Activated B cell treated with CpG ODN at 0.5 μM for 24 hours (primary cell): ENCODE measurements at regions of chr20 and their contacts with region 1.

Region 1: GRCh38 chr20:33992923-33993575 is 662 bp upstream of the RALY start:
- DNase-seq: peak; percentile 98
- ATAC-seq: peak; percentile 84
- H3K4me3 Mint-ChIP-seq: peak overlapping the region; percentile 95
- H3K27ac Mint-ChIP-seq: peak overlapping the region; percentile 98
- H3K4me1 Mint-ChIP-seq: peaks cover 60% of the 10 kb centered on the region
- H3K27me3 Mint-ChIP-seq: no peaks in the 10 kb centered on the region
- CTCF ChIP-seq: no peak

Region 2: GRCh38 chr20:33401184-33401920 is 591.7 kb before region 1 on chr20 and contains the start of gene CDK5RAP1:
- CTCF ChIA-PET with region 1: no interaction called
- POLR2A ChIA-PET with region 1: no interaction called
- intact Hi-C with region 1: loop called (anchors 10 kb)
- DNase-seq: peak; percentile 76
- ATAC-seq: peak; percentile 99
- H3K4me3 Mint-ChIP-seq: peak within 1 kb of the TSS; percentile 94
- H3K27ac Mint-ChIP-seq: peak within 1 kb of the TSS; percentile 90
- H3K4me1 Mint-ChIP-seq: peaks cover 41% of the 10 kb centered on the region
- H3K27me3 Mint-ChIP-seq: no peaks in the 10 kb centered on the region
- CTCF ChIP-seq: no peak
- total RNA-seq, gene CDK5RAP1: 44.2 and 50.5 TPM in 2 replicates

Region 3: DNA sequence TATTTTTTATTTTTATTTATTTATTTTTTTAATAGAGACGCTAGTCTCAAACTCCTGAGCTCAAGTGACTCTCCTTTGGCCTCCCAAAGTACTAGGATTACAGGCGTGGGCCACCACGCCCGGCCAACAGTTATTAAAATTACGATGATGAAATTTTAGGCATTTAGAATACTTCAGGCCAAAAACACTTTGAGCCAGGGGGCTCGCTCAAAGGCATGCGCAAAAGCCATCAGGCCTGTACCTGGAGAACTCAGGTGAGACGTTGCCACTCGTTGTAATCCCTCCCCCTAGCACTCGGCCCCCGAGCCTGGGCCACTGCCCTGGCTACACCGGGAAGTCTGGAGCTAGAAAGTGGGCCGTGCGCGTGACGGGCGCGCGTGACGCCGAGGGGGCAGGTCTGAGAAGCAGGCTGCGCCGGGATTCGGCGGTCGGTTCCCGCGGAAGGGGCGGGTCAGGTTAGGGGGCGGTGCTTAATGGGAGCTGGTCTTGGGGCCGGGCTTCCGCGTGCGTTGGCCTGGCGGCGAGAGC is 503.5 kb before region 1 on chr20:
- CTCF ChIA-PET with region 1: no interaction called
- POLR2A ChIA-PET with region 1: interaction called, 15 read pairs
- intact Hi-C with region 1: loop called (anchors 2 kb)
- DNase-seq: peak; percentile 99
- ATAC-seq: peak; percentile 96
- H3K4me3 Mint-ChIP-seq: peak overlapping the region; percentile 84
- H3K27ac Mint-ChIP-seq: peak overlapping the region; percentile 88
- H3K4me1 Mint-ChIP-seq: peaks cover 15% of the 10 kb centered on the region
- H3K27me3 Mint-ChIP-seq: no peaks in the 10 kb centered on the region
- CTCF ChIP-seq: no peak

Region 4: DNA sequence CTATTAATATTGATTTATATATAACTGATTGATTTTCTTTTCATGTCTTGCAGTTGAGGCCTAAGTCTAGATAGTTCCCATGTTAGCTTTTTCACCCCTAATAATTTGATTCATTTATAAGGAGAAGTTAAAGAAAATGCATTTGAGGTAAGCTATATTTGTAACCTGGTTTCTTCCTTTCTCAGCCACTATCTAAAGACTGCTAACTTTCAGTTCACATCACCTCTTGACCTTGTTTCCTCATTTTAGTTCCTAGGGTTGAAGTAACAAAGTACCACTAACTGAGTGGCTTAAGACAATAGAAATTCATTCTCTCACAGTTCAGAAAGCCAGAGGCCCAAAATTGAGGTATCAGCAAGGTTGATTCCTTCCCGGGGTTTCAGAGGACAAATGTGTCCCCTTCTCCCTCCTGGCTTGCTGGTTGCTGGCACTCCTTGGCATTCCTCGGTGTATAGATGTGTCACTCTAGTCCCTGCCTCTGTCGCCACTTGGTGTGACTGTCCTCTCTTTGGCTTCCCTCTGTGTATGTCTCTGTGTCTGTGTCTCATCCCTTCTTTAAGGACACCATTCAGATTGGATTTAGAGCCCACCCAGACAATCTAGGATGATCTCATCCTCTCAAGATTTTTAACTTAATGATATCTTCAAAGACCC is 386.8 kb before region 1 on chr20:
- CTCF ChIA-PET with region 1: no interaction called
- POLR2A ChIA-PET with region 1: no interaction called
- intact Hi-C with region 1: no loop called
- DNase-seq: peak; percentile 16
- ATAC-seq: peak; percentile 69
- H3K4me3 Mint-ChIP-seq: peak overlapping the region; percentile 52
- H3K27ac Mint-ChIP-seq: peak overlapping the region; percentile 87
- H3K4me1 Mint-ChIP-seq: peaks cover 86% of the 10 kb centered on the region
- H3K27me3 Mint-ChIP-seq: no peaks in the 10 kb centered on the region
- CTCF ChIP-seq: no peak

Region 5: DNA sequence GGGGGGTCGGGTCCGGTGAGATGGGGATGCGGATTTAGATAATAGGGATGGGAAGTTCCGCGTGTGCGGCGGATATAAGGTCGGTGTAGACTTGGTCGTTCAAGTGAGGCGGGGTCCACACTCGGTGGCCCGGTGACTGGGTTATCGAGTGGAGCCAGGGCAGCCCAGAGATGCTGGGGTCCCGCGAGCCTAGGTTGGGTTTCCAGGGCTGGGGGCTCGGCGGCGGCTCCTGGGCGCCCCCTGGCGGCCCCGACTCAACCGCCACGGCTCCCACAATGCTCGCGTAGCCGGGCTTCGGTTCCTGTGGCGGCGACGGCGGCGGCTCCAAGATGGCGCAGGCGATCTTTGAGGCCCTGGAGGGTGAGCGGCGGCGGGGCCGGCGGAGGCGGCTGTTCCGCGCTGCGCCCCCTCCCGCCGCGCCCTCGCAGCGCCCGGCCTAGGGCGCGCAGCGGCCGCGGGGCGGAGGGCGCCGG is 261.3 kb before region 1 on chr20 and contains the start of gene ZNF341:
- CTCF ChIA-PET with region 1: no interaction called
- POLR2A ChIA-PET with region 1: interaction called, 22 read pairs
- intact Hi-C with region 1: loop called (anchors 1 kb)
- DNase-seq: no peak
- ATAC-seq: peak; percentile 79
- H3K4me3 Mint-ChIP-seq: peak within 1 kb of the TSS; percentile 90
- H3K27ac Mint-ChIP-seq: peak within 1 kb of the TSS; percentile 93
- H3K4me1 Mint-ChIP-seq: peaks cover 26% of the 10 kb centered on the region
- H3K27me3 Mint-ChIP-seq: no peaks in the 10 kb centered on the region
- CTCF ChIP-seq: no peak
- total RNA-seq, gene ZNF341: 9.2 and 10.1 TPM in 2 replicates

Region 6: DNA sequence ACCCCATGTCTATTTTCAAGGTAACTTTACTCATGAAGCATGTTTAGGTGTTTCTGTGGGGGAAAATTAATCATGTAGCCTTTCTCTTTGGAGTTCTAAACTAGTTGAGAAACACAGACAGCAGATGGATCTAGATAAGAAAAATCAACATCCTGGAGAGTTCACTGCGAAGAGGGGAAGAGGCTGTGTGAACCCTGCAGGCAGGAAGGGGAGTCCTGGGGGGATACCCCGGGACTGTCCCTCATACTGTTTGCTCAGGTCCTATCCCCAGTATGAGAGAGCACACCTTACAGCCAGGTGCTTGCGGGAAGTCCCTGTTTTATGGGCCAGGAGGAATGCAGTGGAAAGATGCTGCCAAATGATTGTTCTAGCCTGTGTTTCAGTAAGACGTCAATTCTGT is 149.2 kb before region 1 on chr20:
- CTCF ChIA-PET with region 1: no interaction called
- POLR2A ChIA-PET with region 1: no interaction called
- intact Hi-C with region 1: loop called (anchors 1 kb)
- DNase-seq: peak; percentile 22
- ATAC-seq: peak; percentile 97
- H3K4me3 Mint-ChIP-seq: peak overlapping the region; percentile 53
- H3K27ac Mint-ChIP-seq: peak overlapping the region; percentile 74
- H3K4me1 Mint-ChIP-seq: peaks cover 87% of the 10 kb centered on the region
- H3K27me3 Mint-ChIP-seq: no peaks in the 10 kb centered on the region
- CTCF ChIP-seq: no peak

Region 7: DNA sequence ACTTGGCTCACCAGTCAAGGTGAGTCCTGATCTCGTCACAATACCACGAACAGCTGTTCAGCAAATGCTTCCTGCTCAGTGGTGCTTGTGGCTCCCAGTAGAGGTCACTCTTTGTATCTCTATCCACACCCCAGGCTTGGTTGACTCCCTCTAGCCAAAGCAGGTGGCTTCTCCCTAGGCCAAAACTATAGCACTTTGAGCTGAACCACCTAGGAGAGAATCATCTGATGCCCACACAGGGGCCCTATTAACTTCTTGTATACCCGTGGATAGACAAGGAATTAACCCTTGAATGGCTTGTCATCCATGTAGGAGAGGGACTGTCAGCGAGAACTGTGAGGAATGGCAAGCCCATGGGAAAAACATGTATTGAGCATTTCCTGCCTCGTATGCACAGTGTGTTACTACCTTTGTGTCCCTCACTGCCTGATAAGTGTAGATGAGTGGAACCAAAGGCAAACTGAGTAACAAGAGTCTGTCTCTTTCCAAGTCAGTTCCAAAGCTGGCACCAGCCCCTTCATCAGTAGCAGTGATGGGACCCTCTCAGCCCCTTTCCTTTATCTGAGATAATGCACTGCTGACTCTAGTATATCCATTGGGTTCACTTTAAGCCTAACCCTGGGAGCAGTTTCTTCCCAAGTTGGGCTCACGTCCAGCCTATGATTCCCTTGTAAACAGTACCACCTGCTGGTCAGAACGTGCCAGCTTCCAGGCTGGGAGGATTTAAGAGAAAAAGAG is 76.5 kb after region 1 on chr20:
- CTCF ChIA-PET with region 1: no interaction called
- POLR2A ChIA-PET with region 1: no interaction called
- intact Hi-C with region 1: no loop called
- DNase-seq: no peak
- ATAC-seq: peak; percentile 89
- H3K4me3 Mint-ChIP-seq: no peak overlapping the region
- H3K27ac Mint-ChIP-seq: peak overlapping the region; percentile 61
- H3K4me1 Mint-ChIP-seq: peaks cover 24% of the 10 kb centered on the region
- H3K27me3 Mint-ChIP-seq: no peaks in the 10 kb centered on the region
- CTCF ChIP-seq: peak; percentile 36

Region 8: DNA sequence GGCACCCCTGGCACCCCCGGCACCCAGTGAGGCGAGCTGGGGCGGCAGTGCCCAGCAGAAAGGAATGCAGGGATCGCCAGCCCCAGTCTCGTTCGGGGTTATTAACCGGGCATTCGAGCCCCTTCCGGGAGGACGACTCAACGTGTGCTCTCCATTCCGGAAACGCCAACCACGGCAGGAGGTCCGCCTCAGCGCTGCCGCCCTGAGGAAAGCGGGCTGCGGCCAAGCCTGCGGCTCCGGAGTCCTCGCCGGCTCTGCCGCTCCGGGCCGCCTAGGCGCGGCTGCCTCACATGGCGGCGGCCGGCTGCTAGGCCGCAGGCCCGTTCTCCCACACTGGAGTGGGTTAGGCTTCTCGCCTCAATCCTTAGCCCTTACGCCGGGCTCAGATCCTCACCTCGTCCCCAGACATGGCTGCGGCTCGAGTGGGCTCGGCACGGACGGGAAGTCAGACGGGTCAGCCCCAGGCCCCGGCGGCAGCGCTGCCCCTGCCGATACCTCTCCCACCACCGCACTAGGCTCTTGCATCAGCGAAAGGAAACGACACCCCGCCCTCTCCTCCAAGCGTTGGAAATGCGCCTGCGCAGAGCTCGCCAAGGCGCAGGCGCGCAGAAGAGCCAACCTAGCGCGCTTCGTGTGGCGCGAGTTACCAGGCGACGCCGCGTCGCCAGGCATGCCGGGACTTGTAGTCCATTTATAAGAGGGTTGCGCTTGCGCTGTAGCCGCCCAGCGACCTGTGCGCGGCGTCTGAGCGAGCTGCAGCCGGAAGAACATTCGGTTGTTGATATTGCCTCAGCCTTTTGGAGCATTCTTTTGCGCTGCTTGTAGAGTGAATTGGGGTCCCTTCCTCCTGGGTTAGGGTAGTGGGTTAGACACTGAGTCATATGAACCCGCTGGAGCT is 118.9 kb after region 1 on chr20 and contains the start of gene EIF2S2:
- CTCF ChIA-PET with region 1: no interaction called
- POLR2A ChIA-PET with region 1: interaction called, 33 read pairs
- intact Hi-C with region 1: loop called (anchors 1 kb)
- DNase-seq: peak; percentile 87
- ATAC-seq: peak; percentile 84
- H3K4me3 Mint-ChIP-seq: peak within 1 kb of the TSS; percentile 96
- H3K27ac Mint-ChIP-seq: peak within 1 kb of the TSS; percentile 98
- H3K4me1 Mint-ChIP-seq: peaks cover 49% of the 10 kb centered on the region
- H3K27me3 Mint-ChIP-seq: no peaks in the 10 kb centered on the region
- CTCF ChIP-seq: no peak
- total RNA-seq, gene EIF2S2: 58.3 and 62.2 TPM in 2 replicates

Region 9: GRCh38 chr20:34579191-34579978 is 586.3 kb after region 1 on chr20:
- CTCF ChIA-PET with region 1: no interaction called
- POLR2A ChIA-PET with region 1: no interaction called
- intact Hi-C with region 1: no loop called
- DNase-seq: no peak
- ATAC-seq: no peak
- H3K4me3 Mint-ChIP-seq: no peak overlapping the region
- H3K27ac Mint-ChIP-seq: peak overlapping the region; percentile 73
- H3K4me1 Mint-ChIP-seq: peaks cover 36% of the 10 kb centered on the region
- H3K27me3 Mint-ChIP-seq: no peaks in the 10 kb centered on the region
- CTCF ChIP-seq: no peak

Region 10: DNA sequence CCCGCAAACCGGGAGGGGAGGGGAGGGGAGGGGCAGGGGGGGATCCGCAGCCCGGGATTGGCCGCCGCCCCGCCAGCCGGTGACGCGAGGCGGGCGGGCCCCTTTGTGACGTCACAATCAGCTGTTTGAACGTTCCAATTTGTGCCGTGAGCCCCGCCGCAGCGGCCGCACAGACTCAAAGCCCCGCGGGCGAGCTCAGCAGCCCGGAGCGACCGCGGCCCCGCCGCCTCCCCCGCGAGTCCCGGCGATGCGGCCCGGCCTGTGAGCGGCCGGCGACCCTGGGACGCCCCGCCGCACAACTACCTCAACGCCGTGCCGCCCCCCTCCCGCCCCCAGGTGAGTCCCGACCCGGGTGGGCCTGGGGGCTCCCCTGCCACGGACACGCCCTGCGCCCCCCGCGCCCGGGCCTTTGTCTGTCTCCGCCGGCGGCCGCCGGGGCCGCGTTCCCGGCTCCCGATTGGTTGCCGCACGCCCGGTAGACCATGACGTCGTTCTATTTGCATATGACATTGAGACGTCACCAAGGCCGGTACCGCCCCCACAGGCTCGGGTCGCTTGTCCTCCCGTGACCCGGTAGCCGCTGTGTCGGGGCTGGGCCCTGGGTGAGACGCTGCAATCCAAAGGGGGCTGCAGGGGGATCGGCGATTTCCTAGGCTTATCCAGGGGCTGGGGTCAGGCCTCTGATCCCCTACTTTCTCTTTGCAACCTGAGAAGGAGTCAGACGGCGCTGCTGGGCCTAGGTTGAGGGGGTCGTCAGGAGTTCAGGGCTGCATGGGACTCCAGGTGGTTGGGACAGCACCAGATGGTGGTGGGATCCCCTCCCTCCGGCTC is 711.3 kb after region 1 on chr20 and contains the start of gene TP53INP2:
- CTCF ChIA-PET with region 1: no interaction called
- POLR2A ChIA-PET with region 1: no interaction called
- intact Hi-C with region 1: loop called (anchors 10 kb)
- DNase-seq: peak; percentile 84
- ATAC-seq: peak; percentile 61
- H3K4me3 Mint-ChIP-seq: peak within 1 kb of the TSS; percentile 92
- H3K27ac Mint-ChIP-seq: peak within 1 kb of the TSS; percentile 86
- H3K4me1 Mint-ChIP-seq: peaks cover 21% of the 10 kb centered on the region
- H3K27me3 Mint-ChIP-seq: peaks cover 7% of the 10 kb centered on the region
- CTCF ChIP-seq: no peak
- total RNA-seq, gene TP53INP2: 4.0 and 4.2 TPM in 2 replicates